ENCODE measurements at regions of chr6 and their contacts with region 1.

Region 1: DNA sequence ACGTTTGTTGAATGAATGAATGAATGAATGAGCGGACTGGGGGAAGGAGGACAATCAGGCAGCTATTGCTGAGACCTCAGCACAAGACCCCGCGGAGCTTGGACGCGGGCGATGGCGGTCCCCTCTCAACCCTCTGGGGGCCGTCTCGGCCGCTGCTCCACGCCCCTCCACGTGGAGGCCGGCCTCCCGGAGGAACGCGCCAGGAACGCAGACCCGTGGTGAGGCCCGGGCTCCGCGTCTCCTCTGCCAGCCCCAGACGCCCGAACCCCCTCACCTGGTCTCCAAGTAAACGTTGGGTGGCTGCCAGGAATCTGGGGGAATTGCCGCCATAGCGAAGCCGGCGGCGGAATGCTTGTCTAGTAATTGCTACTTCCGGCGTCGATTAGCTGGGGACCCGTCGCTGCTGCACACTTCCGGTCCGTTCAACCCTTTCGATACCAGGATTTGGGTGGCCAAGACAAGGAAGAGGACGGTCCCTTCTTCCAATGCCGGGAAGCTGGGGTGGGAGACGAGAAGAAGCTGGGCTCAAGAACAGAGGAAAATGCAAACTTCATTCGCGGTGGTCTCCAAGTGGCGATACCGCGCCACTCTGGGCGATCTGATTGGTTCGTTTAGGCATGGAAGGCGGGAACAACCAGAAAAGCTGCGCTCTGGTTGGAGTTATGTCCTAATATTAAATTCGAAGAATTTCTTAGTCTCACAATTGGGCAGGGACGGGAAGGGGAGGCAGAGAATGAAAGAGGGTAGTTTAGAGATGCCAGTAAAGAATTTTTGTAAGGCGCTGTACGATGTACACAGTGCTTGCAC is at the start of gene PPIL1:
- DNase-seq: peak; percentile 76
- H3K4me3 ChIP-seq: peak within 1 kb of the TSS; percentile 98
- H3K27ac ChIP-seq: peak within 1 kb of the TSS; percentile 98
- H3K27me3 ChIP-seq: no peaks in the 10 kb centered on the region
- CTCF ChIP-seq: 0 out of 2 replicates have a peak, but pooled peaks have one; percentile 11
- polyA plus RNA-seq, gene PPIL1: 34.4 and 40.7 TPM in 2 replicates

Region 2: GRCh38 chr6:36851149-36851614 is 23.5 kb before region 1 on chr6:
- CTCF ChIA-PET with region 1: interaction called, 10 read pairs
- POLR2A ChIA-PET with region 1: interaction called, 3 read pairs
- DNase-seq: peak; percentile 21
- H3K4me3 ChIP-seq: no peak overlapping the region
- H3K27ac ChIP-seq: peak overlapping the region; percentile 31
- H3K27me3 ChIP-seq: no peaks in the 10 kb centered on the region
- CTCF ChIP-seq: peak; percentile 72

Region 3: DNA sequence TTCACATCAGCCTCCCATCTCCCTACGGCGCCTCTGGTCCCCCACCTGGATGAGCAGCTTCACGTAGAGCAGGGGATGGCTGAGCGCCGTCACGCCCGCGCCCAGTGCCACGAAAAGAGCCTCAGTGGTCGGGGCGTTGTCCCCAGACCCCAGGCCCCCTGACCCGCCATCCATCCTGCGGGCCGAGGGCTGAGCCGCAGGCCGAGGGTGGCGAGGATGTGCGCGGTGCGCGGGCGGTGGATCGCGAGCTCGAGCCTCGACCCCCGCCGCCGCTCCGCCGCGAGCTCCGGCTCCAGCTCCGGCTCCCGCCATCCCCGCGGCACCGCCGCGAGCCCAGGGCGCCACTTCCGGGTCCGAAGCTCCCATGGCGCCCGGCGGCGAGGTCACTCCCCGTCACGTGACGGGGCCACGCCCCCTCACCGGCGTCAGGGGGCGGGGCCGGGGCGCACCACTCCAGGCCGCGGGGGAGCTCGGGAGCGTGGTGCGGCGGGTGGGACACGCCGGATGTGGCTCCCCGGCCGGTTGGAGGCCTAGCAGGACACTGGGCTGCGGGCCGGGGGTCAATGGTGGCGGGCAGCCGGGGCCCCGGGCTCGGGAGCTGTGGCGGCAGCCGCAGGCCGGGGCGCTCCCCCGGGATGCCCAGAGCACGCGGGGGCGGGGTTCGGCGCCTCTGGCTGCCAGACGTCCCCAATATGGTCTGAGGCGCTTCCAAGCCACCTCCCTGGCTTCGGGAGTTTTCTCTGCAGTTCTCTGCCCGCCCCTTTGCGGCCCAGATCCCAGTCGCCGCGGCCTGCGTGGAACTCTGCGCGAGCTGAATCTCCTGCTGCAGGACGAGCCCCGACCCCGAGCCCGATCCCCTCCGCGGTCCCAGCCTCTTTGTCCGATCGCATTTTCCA is 111.4 kb after region 1 on chr6 and contains the start of gene MTCH1:
- CTCF ChIA-PET with region 1: no interaction called
- POLR2A ChIA-PET with region 1: interaction called, 13 read pairs
- DNase-seq: peak; percentile 67
- H3K4me3 ChIP-seq: peak within 1 kb of the TSS; percentile 93
- H3K27ac ChIP-seq: peak within 1 kb of the TSS; percentile 69
- H3K27me3 ChIP-seq: peaks cover 4% of the 10 kb centered on the region
- CTCF ChIP-seq: no peak
- polyA plus RNA-seq, gene MTCH1: 149 and 160 TPM in 2 replicates

Region 4: DNA sequence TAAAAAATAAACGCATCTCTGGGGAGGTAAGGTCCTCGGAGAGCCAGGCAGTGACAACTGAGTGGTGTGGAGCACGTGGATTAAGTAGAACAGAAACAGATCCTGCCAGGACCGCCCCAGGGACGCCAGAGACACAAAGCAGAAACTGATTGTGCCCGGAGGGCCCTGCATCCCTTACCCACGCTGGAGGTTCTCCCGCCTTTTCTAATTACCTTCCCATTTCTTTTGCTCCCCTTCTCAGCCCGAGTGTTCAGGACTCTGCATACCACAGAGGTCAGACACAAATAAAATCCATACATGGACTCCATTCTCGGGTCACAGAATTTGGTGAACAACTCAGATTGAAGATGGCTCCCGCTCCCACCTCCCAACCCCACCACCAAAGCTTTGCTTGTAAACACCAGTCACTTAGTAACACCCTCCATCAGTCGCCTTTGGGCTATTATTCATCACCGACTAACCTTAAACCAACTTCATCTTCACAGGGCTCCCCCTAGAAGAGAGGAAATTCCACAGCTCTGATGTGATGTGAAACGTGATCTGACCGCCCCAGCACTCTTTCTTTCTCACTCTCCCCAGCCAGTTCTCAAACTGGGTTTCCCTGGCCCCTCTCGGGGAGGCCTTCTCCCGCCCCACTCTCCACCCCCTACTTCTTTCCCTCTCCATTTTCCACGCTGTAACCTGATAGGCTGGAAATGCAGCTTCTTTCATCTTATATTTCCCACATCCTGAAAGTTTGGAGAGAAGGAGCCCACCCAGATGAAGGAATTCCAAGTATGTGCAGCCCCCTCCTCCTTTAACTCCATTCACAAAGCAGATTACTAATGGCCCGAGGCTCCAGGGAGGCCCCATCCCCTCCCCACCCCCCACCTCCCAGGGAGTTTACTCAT is 262.8 kb after region 1 on chr6:
- CTCF ChIA-PET with region 1: no interaction called
- POLR2A ChIA-PET with region 1: no interaction called
- DNase-seq: peak; percentile 93
- H3K4me3 ChIP-seq: peak overlapping the region; percentile 36
- H3K27ac ChIP-seq: peak overlapping the region; percentile 92
- H3K27me3 ChIP-seq: no peaks in the 10 kb centered on the region
- CTCF ChIP-seq: no peak

Measured in AG04450 (cell line).